ENCODE measurements at regions of chr1 and their contacts with region 1.

Region 1: GRCh38 chr1:8671306-8671917 is 146.0 kb downstream of the RERE start:
- DNase-seq: peak in 5 of 9 donors; percentile 21 to 31 (median 26)
- ATAC-seq: peak; percentile 58
- H3K4me3 ChIP-seq: no peak overlapping the region
- H3K4me3 Mint-ChIP-seq: peak overlapping the region in 1 of 10 donors; percentile 7
- H3K27ac ChIP-seq: no peak overlapping the region
- H3K27ac Mint-ChIP-seq: no peak overlapping the region
- H3K4me1 ChIP-seq: peaks cover 0 to 9% of the 10 kb centered on the region in 2 donors
- H3K4me1 Mint-ChIP-seq: peaks cover 26 to 56% (median 35%) of the 10 kb centered on the region in 7 donors
- H3K27me3 ChIP-seq: no peaks in the 10 kb centered on the region
- H3K27me3 Mint-ChIP-seq: no peaks in the 10 kb centered on the region

Region 2: DNA sequence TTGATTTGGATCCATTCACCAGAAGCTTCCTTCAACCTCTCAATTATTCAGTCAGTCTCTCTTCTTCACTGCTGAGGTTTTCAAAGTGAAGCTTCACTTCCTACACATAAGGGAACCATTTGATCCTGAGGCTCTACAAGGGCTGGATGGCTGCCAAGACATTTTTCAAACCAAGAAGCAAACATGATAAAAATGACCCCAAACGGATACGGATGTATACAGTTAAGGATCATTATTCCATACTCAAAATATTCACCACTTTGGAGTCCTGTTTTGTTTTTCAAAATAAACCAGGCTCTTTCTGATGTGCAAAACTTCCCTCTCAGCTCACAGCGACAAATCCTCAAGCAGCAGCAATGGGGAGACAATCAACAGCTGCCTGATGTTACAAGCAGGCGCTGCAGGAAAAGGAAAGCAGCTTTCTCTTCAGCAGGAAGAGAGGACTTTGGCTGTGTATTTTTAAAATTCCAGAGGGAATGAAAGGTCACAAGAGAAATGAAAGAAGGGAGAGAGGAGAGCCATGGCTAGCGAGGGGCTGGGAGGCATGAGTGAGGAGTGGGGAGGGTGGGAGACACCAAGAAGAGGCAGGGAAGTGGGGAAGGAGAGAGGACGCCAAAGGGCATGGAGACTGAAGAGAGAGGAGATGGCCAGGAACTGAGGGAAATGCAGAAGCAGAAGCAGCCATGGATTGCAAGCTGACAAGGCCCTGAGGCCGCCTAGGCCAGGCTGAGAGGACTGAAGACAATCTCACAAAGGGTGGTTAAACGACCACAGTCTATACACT is 208.1 kb before region 1 on chr1:
- CTCF ChIA-PET with region 1: no interaction called
- POLR2A ChIA-PET with region 1: no interaction called
- intact Hi-C with region 1: loop called in 1 of 2 experiments (anchors 10 kb)
- DNase-seq: peak in 7 of 9 donors; percentile 41 to 68 (median 61)
- ATAC-seq: peak; percentile 75
- H3K4me3 ChIP-seq: no peak overlapping the region
- H3K4me3 Mint-ChIP-seq: peak overlapping the region in 9 of 10 donors; percentile 35 to 80 (median 52)
- H3K27ac ChIP-seq: peak overlapping the region; percentile 43
- H3K27ac Mint-ChIP-seq: peak overlapping the region; percentile 54 to 90 (median 85)
- H3K4me1 ChIP-seq: peaks cover 0 to 31% of the 10 kb centered on the region in 2 donors
- H3K4me1 Mint-ChIP-seq: peaks cover 20 to 82% (median 63%) of the 10 kb centered on the region in 7 donors
- H3K27me3 ChIP-seq: no peaks in the 10 kb centered on the region
- H3K27me3 Mint-ChIP-seq: no peaks in the 10 kb centered on the region

Region 3: DNA sequence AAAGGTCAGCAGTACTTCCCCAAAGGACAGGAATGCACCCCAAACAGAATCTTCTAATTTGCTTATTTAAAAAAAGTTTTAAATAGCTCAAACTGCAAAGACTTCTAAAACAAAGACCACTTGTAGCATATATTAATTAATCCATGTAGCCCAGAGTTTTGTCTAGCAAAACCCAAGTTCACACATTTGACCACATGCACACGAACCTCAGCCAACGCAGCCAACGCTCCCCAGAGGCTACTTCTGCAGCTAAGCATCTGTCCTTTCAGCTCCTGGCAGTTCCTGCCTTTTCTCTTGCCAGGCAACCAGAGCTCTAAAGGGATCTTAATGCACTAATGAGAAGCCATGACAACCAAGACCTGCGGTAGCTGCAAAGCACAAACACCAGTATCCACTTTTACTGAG is 56.4 kb after region 1 on chr1:
- CTCF ChIA-PET with region 1: interaction called, 3 read pairs
- POLR2A ChIA-PET with region 1: no interaction called
- intact Hi-C with region 1: loop called in 1 of 2 experiments (anchors 2 kb)
- DNase-seq: no peak
- ATAC-seq: no peak
- H3K4me3 ChIP-seq: no peak overlapping the region
- H3K4me3 Mint-ChIP-seq: no peak overlapping the region
- H3K27ac ChIP-seq: no peak overlapping the region
- H3K27ac Mint-ChIP-seq: no peak overlapping the region
- H3K4me1 ChIP-seq: no peaks in the 10 kb centered on the region
- H3K4me1 Mint-ChIP-seq: peaks cover 5 to 24% (median 9%) of the 10 kb centered on the region in 7 donors
- H3K27me3 ChIP-seq: no peaks in the 10 kb centered on the region
- H3K27me3 Mint-ChIP-seq: no peaks in the 10 kb centered on the region

Measured in naive thymus-derived CD4-positive, alpha-beta T cell (primary cell).